HEK293 (cell line): ENCODE measurements at regions of chr4 and their contacts with region 1.

Region 1: GRCh38 chr4:106369456-106370060 is 980 bp upstream of the GIMD1 start:
- H3K4me3 ChIP-seq: no peak overlapping the region
- H3K27ac ChIP-seq: no peak overlapping the region
- H3K4me1 ChIP-seq: no peaks in the 10 kb centered on the region
- CTCF ChIP-seq: no peak

Region 2: DNA sequence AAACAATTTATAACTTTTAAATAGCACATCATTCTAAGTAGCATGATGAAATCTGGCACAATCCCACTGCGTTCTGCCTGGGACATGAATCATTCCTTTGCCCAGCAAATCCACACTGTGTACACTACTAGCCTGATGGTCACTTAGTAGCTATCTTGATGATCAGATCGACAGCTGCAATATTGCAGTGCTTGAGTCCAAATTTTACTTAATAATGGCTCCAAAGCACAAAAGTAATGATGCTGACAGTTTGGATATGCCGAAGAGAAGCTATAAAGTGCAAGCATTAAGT is 560.9 kb before region 1 on chr4:
- CTCF ChIA-PET with region 1: no interaction called
- POLR2A ChIA-PET with region 1: no interaction called
- H3K4me3 ChIP-seq: no peak overlapping the region
- H3K27ac ChIP-seq: no peak overlapping the region
- H3K4me1 ChIP-seq: no peaks in the 10 kb centered on the region
- CTCF ChIP-seq: no peak

Region 3: GRCh38 chr4:106502106-106502699 is 132.6 kb after region 1 on chr4:
- CTCF ChIA-PET with region 1: interaction called, 14 read pairs
- POLR2A ChIA-PET with region 1: no interaction called
- H3K4me3 ChIP-seq: no peak overlapping the region
- H3K27ac ChIP-seq: no peak overlapping the region
- H3K4me1 ChIP-seq: no peaks in the 10 kb centered on the region
- CTCF ChIP-seq: peak; percentile 47; the same call in 1 of the 2 replicates